ENCODE measurements at regions of chr20 and their contacts with region 1.

Region 1: GRCh38 chr20:47792021-47792618 is 6.8 kb upstream of the SULF2 start:
- DNase-seq: peak; percentile 42 to 83 (median 75)
- ATAC-seq: peak; percentile 70 to 91 (median 86)
- H3K4me3 ChIP-seq: no peak overlapping the region
- H3K27ac ChIP-seq: peak overlapping the region in 3 of 12 donors; percentile 9 to 70 (median 48)
- H3K4me1 ChIP-seq: peaks cover 0 to 20% (median 4%) of the 10 kb centered on the region in 12 donors
- H3K27me3 ChIP-seq: peaks cover 0 to 7% (median 0%) of the 10 kb centered on the region in 9 donors
- CTCF ChIP-seq: no peak
- POLR2A ChIP-seq: no peak

Region 2: GRCh38 chr20:47677635-47678453 is 114.3 kb before region 1 on chr20:
- intact Hi-C with region 1: loop called in 7 of 10 experiments (anchors 2 to 10 kb)
- DNase-seq: no peak
- ATAC-seq: no peak
- H3K4me3 ChIP-seq: no peak overlapping the region
- H3K27ac ChIP-seq: no peak overlapping the region
- H3K4me1 ChIP-seq: peaks cover 0 to 26% (median 16%) of the 10 kb centered on the region in 12 donors
- H3K27me3 ChIP-seq: no peaks in the 10 kb centered on the region
- CTCF ChIP-seq: peak; percentile 62 to 82 (median 72)
- POLR2A ChIP-seq: peak in 1 of 2 donors; percentile 23

Region 3: DNA sequence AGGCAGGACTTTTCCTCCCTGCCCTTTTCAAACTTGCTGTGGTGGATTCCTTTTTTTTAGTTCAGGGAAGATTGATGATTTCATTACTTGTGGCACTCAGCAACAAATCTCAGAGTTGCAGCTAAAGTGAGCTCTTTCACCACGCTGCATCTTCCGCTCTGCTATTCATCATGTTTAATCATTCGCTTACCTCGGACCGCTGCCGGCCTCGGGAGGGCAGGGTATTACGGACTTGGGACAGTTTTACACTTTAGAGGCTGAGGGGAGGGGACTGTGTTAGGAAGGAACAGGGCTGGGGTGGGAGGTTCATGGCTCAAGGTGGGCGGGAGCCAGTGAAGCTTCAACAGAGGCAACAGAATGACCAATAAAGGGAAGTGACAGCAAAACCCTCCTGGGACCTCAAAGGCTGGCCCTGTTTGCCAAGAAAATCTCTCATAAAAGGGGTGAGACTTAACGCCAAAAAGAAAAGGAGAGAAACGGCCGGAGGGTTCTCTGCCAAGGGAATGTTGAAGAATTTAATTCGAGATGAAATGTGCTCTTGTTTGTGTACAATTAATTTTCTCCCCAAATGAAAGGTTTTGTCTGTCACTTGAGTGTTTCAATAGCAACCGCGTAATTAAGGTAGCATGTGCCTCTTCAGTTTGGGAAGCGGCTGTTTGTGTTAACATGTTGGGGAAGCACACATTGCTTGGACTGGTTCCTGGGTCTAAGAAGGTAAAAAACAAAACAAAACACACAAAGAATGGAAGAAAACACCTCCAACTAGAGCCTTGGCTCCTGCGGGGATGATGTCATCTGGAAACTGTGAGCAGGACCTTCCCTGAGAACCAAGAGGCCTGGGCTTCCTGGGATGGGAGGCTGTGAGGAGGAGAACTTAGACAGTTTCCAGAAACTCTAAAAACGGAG is 65.7 kb after region 1 on chr20:
- intact Hi-C with region 1: no loop called
- DNase-seq: peak in 4 of 5 donors; percentile 44 to 53 (median 50)
- ATAC-seq: peak in 3 of 4 donors; percentile 73 to 87 (median 74)
- H3K4me3 ChIP-seq: no peak overlapping the region
- H3K27ac ChIP-seq: peak overlapping the region in 9 of 12 donors; percentile 4 to 69 (median 62)
- H3K4me1 ChIP-seq: peaks cover 0 to 19% (median 8%) of the 10 kb centered on the region in 12 donors
- H3K27me3 ChIP-seq: peaks cover 0 to 8% (median 0%) of the 10 kb centered on the region in 9 donors
- CTCF ChIP-seq: no peak
- POLR2A ChIP-seq: no peak

Region 4: DNA sequence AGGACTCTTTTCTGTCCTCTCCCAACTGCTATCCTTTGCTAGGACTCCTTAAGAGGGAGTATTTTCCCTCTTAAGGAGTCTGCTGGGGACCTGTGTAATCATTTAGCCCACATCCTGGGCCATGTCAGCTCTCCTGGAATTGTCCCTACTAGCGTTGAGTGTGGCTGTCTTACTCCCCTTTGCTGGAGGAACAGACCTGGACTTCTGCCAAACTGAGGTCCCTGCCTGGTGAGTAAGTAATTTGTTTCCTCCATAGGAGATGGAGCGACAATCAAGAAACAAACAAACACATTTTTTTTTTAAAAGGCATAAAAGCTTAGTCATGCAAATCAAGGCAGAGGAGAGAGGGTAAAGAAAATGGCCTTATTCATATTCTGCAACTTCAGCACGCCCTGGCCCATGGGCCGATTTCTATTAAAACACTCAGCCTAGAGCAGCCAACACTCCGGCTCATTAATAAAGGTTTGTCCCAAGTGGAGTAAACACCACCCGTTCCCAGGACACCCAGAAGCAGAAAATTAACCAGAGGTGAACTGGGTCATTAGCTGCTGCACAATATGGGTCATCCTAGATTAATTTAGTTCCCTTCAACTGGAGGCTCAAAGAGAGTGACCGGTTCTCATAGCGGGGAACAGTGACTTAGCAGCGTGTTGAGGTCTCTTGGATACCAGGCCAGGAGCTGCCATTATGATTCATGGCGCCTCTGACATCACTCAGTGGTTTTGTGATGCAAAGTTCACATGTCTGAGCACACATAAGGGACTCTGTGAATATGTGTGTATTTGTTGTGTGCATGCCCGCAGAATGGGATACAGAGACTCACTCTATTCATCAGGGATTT is 158.2 kb after region 1 on chr20:
- intact Hi-C with region 1: loop called in 1 of 10 experiments (anchors 10 kb)
- DNase-seq: peak in 3 of 5 donors; percentile 32 to 55 (median 40)
- ATAC-seq: peak in 2 of 4 donors; percentile 36 to 69
- H3K4me3 ChIP-seq: no peak overlapping the region
- H3K27ac ChIP-seq: no peak overlapping the region
- H3K4me1 ChIP-seq: peaks cover 0 to 3% (median 0%) of the 10 kb centered on the region in 12 donors
- H3K27me3 ChIP-seq: peaks cover 0 to 3% (median 0%) of the 10 kb centered on the region in 9 donors
- CTCF ChIP-seq: no peak
- POLR2A ChIP-seq: no peak

Region 5: GRCh38 chr20:47973519-47974233 is 181.6 kb after region 1 on chr20:
- intact Hi-C with region 1: loop called in 1 of 10 experiments (anchors 10 kb)
- DNase-seq: peak in 4 of 5 donors; percentile 54 to 77 (median 66)
- ATAC-seq: peak; percentile 37 to 90 (median 66)
- H3K4me3 ChIP-seq: no peak overlapping the region
- H3K27ac ChIP-seq: peak overlapping the region in 11 of 12 donors; percentile 1 to 85 (median 57)
- H3K4me1 ChIP-seq: peaks cover 0 to 25% (median 6%) of the 10 kb centered on the region in 12 donors
- H3K27me3 ChIP-seq: peaks cover 0 to 11% (median 0%) of the 10 kb centered on the region in 9 donors
- CTCF ChIP-seq: no peak
- POLR2A ChIP-seq: no peak

Measured in heart left ventricle (tissue), 16 donors.